ENCODE measurements at regions of chr2 and their contacts with region 1.

Region 1: DNA sequence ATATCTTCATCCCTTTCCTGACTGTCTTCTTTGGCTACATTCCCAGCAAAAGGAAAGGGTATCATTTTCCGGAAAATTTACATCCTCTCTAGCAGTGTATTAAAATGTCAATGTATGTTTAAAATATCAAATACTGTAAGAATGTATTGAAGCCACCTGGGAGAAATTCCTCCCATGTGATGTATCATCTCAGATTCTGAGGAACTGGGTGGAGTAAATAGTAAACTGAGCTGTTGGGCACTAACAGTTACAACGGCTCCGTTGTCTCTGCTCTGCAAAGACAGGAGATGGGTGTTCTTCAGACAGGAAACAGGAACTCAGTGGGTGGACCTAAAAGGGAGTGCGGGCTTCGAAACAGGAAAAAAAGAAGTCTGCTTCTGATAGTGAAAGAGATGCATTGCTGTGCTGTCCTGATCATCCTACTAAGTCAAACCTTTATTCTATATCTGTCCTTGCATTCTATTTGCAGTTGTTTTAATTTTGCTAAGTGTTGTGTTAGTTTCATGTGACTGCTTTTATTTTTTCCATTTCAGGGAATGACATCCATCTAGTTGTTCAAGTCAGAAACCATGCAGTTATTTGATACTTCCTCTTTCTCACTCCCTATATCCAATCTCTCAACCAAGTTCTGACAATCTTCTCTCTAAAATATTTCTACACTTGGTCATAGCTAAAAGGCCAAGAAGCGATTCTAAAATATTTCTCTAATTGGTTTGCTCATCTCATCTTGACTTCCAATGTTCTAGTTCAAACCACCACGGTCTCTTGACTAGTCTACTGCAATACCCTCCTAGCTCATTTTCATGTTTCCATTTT is 19.4 kb downstream of the DOK1 start:
- DNase-seq: no peak
- ATAC-seq: peak; percentile 67
- H3K4me3 Mint-ChIP-seq: peak overlapping the region; percentile 53
- H3K27ac Mint-ChIP-seq: peak overlapping the region; percentile 89
- H3K4me1 Mint-ChIP-seq: peaks cover 39% of the 10 kb centered on the region
- H3K27me3 Mint-ChIP-seq: no peaks in the 10 kb centered on the region
- CTCF ChIP-seq: no peak

Region 2: DNA sequence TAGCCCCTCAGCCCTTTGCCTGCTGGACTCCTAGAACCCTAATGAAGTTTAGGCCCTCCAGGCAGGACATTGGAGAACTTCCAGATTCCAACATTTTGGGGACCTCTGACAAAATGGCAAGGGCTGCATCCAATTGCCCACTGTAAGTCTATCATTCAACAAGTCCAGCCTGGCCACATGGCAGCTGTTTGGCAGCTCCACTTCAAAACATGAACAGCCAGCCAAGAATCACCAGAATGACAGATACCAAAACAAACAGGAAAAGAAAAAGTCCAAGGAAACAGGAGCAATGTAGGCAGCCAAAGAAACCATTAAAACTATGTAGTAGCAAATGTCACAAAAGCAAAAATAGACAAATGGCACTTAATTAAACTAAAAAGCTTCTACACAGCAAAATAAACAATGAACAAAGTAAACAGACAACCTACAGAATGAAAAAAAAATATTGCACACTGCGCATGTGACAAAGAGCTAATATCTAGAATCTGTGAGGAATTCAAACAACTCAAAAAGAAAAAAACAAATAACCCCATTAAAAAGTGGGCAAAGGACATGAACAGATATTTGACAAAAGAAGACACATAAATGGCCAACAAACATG is 256.2 kb before region 1 on chr2:
- CTCF ChIA-PET with region 1: no interaction called
- POLR2A ChIA-PET with region 1: no interaction called
- intact Hi-C with region 1: no loop called
- DNase-seq: no peak
- ATAC-seq: no peak
- H3K4me3 Mint-ChIP-seq: no peak overlapping the region
- H3K27ac Mint-ChIP-seq: no peak overlapping the region
- H3K4me1 Mint-ChIP-seq: no peaks in the 10 kb centered on the region
- H3K27me3 Mint-ChIP-seq: no peaks in the 10 kb centered on the region
- CTCF ChIP-seq: no peak

Region 3: GRCh38 chr2:74538881-74539339 is 35.0 kb before region 1 on chr2:
- CTCF ChIA-PET with region 1: interaction called, 3 read pairs
- POLR2A ChIA-PET with region 1: interaction called, 20 read pairs
- intact Hi-C with region 1: no loop called
- DNase-seq: no peak
- ATAC-seq: peak; percentile 77
- H3K4me3 Mint-ChIP-seq: peak overlapping the region; percentile 81
- H3K27ac Mint-ChIP-seq: peak overlapping the region; percentile 89
- H3K4me1 Mint-ChIP-seq: peaks cover 31% of the 10 kb centered on the region
- H3K27me3 Mint-ChIP-seq: no peaks in the 10 kb centered on the region
- CTCF ChIP-seq: no peak

Region 4: GRCh38 chr2:74553892-74554645 is 19.9 kb before region 1 on chr2 and contains the start of gene LOXL3:
- CTCF ChIA-PET with region 1: interaction called, 3 read pairs
- POLR2A ChIA-PET with region 1: interaction called, 6 read pairs
- intact Hi-C with region 1: loop called (anchors 1 kb)
- DNase-seq: peak; percentile 83
- ATAC-seq: peak; percentile 51
- H3K4me3 Mint-ChIP-seq: peak within 1 kb of the TSS; percentile 97
- H3K27ac Mint-ChIP-seq: peak within 1 kb of the TSS; percentile 90
- H3K4me1 Mint-ChIP-seq: peaks cover 32% of the 10 kb centered on the region
- H3K27me3 Mint-ChIP-seq: peaks cover 7% of the 10 kb centered on the region
- CTCF ChIP-seq: no peak
- total RNA-seq, gene LOXL3: 1.4 and 2.3 TPM in 2 replicates

Region 5: GRCh38 chr2:75130171-75130570 is 556.2 kb after region 1 on chr2:
- CTCF ChIA-PET with region 1: no interaction called
- POLR2A ChIA-PET with region 1: no interaction called
- intact Hi-C with region 1: no loop called
- DNase-seq: no peak
- ATAC-seq: no peak
- H3K4me3 Mint-ChIP-seq: no peak overlapping the region
- H3K27ac Mint-ChIP-seq: no peak overlapping the region
- H3K4me1 Mint-ChIP-seq: no peaks in the 10 kb centered on the region
- H3K27me3 Mint-ChIP-seq: no peaks in the 10 kb centered on the region
- CTCF ChIP-seq: no peak